ENCODE measurements at regions of chr4 and their contacts with region 1.

Region 1: DNA sequence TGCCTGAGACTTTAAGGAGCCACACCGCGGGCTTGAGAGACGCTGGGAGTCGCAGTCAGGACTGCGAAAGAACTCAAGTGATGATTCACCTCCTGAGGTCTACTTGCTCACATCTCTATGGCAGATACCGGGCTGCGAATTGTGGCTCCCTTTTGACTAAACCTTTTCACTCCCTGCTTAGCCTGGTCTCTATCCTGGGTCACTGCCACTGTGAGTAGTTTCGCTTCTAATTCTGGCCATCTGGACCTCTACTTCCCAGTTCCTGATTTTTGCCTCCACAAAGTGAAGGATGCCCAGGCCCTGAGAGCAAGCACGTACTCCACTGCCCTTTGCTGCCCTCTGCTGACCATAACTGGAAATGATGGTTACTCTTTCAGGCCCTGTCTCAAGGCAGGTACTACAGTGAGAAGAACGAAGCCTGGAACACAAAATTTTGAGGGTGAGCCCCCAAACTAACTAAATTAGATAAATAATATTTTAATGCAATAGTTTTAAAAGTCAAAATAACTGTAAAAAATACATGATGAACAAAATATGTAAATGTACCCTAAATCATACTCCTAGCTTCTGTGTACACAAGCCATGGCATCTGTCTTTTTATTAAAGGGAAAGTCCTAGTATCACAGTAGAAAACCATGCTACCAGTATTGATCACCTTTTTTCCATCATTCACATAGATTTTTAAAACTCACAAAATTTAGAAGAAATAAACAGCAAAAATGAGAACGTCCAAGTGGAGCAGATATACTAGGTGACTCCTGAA is 16.7 kb downstream of the MAD2L1 start:
- DNase-seq: peak; percentile 56 to 80 (median 68)
- H3K4me3 ChIP-seq: peak overlapping the region; percentile 21
- H3K27ac ChIP-seq: no peak overlapping the region
- H3K4me1 ChIP-seq: no peaks in the 10 kb centered on the region
- H3K27me3 ChIP-seq: no peaks in the 10 kb centered on the region
- CTCF ChIP-seq: peak; percentile 54 to 85 (median 75)
- EP300 ChIP-seq: no peak
- POLR2A ChIP-seq: no peak

Region 2: GRCh38 chr4:119314356-119314755 is 735.6 kb before region 1 on chr4:
- intact Hi-C with region 1: loop called in 1 of 4 experiments (anchors 10 kb)
- DNase-seq: no peak
- H3K4me3 ChIP-seq: no peak overlapping the region
- H3K27ac ChIP-seq: no peak overlapping the region
- H3K4me1 ChIP-seq: no peaks in the 10 kb centered on the region
- H3K27me3 ChIP-seq: no peaks in the 10 kb centered on the region
- CTCF ChIP-seq: no peak
- EP300 ChIP-seq: no peak
- POLR2A ChIP-seq: no peak

Region 3: GRCh38 chr4:119564106-119564505 is 485.8 kb before region 1 on chr4:
- intact Hi-C with region 1: loop called in 2 of 4 experiments (anchors 10 kb)
- DNase-seq: no peak
- H3K4me3 ChIP-seq: no peak overlapping the region
- H3K27ac ChIP-seq: no peak overlapping the region
- H3K4me1 ChIP-seq: no peaks in the 10 kb centered on the region
- H3K27me3 ChIP-seq: no peaks in the 10 kb centered on the region
- CTCF ChIP-seq: no peak
- EP300 ChIP-seq: no peak
- POLR2A ChIP-seq: no peak

Measured in ovary (tissue), 10 donors.